Psoas muscle (tissue), 8 donors: ENCODE measurements at regions of chr12 and their contacts with region 1.

Region 1: GRCh38 chr12:102364709-102365108 is 115.7 kb downstream of the IGF1 start:
- DNase-seq: no peak
- ATAC-seq: peak; percentile 70 to 98 (median 96)
- H3K4me3 ChIP-seq: peak overlapping the region; percentile 35
- H3K27ac ChIP-seq: peak overlapping the region; percentile 81
- H3K4me1 ChIP-seq: peaks cover 4% of the 10 kb centered on the region
- H3K27me3 ChIP-seq: no peaks in the 10 kb centered on the region
- CTCF ChIP-seq: no peak

Region 2: GRCh38 chr12:101902641-101903040 is 462.1 kb before region 1 on chr12:
- intact Hi-C with region 1: no loop called
- DNase-seq: no peak
- ATAC-seq: no peak
- H3K4me3 ChIP-seq: no peak overlapping the region
- H3K27ac ChIP-seq: no peak overlapping the region
- H3K4me1 ChIP-seq: no peaks in the 10 kb centered on the region
- H3K27me3 ChIP-seq: no peaks in the 10 kb centered on the region
- CTCF ChIP-seq: no peak

Region 3: GRCh38 chr12:102169922-102170621 is 194.6 kb before region 1 on chr12:
- intact Hi-C with region 1: loop called in 1 of 2 experiments (anchors 10 kb)
- DNase-seq: no peak
- ATAC-seq: peak in 3 of 4 donors; percentile 68 to 76 (median 69)
- H3K4me3 ChIP-seq: no peak overlapping the region
- H3K27ac ChIP-seq: no peak overlapping the region
- H3K4me1 ChIP-seq: no peaks in the 10 kb centered on the region
- H3K27me3 ChIP-seq: no peaks in the 10 kb centered on the region
- CTCF ChIP-seq: peak; percentile 85